ENCODE measurements at regions of chr4 and their contacts with region 1.

Region 1: GRCh38 chr4:155777971-155778735 is 19.3 kb downstream of the GUCY1B1 start:
- DNase-seq: no peak
- H3K4me3 ChIP-seq: no peak overlapping the region
- H3K27ac ChIP-seq: no peak overlapping the region
- H3K4me1 ChIP-seq: no peaks in the 10 kb centered on the region
- H3K27me3 ChIP-seq: no peaks in the 10 kb centered on the region
- CTCF ChIP-seq: no peak
- POLR2A ChIP-seq: no peak

Region 2: GRCh38 chr4:155403886-155404285 is 374.3 kb before region 1 on chr4:
- CTCF ChIA-PET with region 1: interaction called, 15 read pairs
- POLR2A ChIA-PET with region 1: no interaction called
- dilution Hi-C with region 1: no loop called
- intact Hi-C with region 1: no loop called
- DNase-seq: peak; percentile 67
- H3K4me3 ChIP-seq: no peak overlapping the region
- H3K27ac ChIP-seq: no peak overlapping the region
- H3K4me1 ChIP-seq: no peaks in the 10 kb centered on the region
- H3K27me3 ChIP-seq: peaks cover 2 to 4% of the 10 kb centered on the region in 2 experiments
- CTCF ChIP-seq: peak; percentile 6 to 22
- POLR2A ChIP-seq: no peak